SK-N-SH (cell line): ENCODE measurements at regions of chr1 and their contacts with region 1.

Region 1: GRCh38 chr1:234499119-234499942 is 20.4 kb upstream of the TARBP1 start:
- DNase-seq: peak; percentile 85
- H3K4me3 ChIP-seq: peak overlapping the region in 1 of 2 experiments; percentile 21; a peak in 1 of 4 replicates
- H3K27ac ChIP-seq: peak overlapping the region; percentile 71 to 81
- H3K4me1 ChIP-seq: peaks cover 23 to 36% of the 10 kb centered on the region in 2 experiments; a peak in 3 of 4 replicates
- H3K27me3 ChIP-seq: no peaks in the 10 kb centered on the region
- CTCF ChIP-seq: peak; percentile 95
- EP300 ChIP-seq: no peak
- RAD21 ChIP-seq: peak; percentile 99

Region 2: DNA sequence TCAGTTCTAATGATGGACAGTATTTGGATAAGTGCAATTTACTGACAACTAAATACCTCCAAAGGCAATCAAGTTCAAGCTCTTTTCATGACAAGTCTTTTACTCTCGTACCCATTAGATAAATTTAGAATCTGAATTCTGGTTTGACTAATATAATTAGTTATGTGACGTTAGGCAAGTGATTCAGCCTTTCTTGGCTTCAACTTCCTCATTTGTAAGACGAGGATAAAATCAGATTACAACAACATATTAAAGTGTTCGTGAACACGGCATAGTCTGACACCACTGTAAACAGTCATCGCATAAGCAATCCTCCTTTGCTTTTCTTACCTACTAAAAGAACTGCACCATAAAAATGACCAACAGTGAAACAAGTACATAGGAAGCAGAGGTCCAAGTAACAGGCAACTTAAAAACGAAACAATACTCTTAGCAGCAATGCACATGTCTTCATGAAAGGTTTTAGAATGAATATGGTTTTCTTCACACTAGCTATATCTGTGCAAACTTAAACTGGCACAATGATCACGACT is 100.4 kb before region 1 on chr1:
- CTCF ChIA-PET with region 1: no interaction called
- POLR2A ChIA-PET with region 1: no interaction called
- DNase-seq: no peak
- H3K4me3 ChIP-seq: peak overlapping the region in 1 of 2 experiments; percentile 9; a peak in 1 of 4 replicates
- H3K27ac ChIP-seq: peak overlapping the region; percentile 35 to 43
- H3K4me1 ChIP-seq: peaks cover 0 to 5% of the 10 kb centered on the region in 2 experiments; a peak in 2 of 4 replicates
- H3K27me3 ChIP-seq: no peaks in the 10 kb centered on the region
- CTCF ChIP-seq: no peak
- EP300 ChIP-seq: no peak
- RAD21 ChIP-seq: no peak

Region 3: DNA sequence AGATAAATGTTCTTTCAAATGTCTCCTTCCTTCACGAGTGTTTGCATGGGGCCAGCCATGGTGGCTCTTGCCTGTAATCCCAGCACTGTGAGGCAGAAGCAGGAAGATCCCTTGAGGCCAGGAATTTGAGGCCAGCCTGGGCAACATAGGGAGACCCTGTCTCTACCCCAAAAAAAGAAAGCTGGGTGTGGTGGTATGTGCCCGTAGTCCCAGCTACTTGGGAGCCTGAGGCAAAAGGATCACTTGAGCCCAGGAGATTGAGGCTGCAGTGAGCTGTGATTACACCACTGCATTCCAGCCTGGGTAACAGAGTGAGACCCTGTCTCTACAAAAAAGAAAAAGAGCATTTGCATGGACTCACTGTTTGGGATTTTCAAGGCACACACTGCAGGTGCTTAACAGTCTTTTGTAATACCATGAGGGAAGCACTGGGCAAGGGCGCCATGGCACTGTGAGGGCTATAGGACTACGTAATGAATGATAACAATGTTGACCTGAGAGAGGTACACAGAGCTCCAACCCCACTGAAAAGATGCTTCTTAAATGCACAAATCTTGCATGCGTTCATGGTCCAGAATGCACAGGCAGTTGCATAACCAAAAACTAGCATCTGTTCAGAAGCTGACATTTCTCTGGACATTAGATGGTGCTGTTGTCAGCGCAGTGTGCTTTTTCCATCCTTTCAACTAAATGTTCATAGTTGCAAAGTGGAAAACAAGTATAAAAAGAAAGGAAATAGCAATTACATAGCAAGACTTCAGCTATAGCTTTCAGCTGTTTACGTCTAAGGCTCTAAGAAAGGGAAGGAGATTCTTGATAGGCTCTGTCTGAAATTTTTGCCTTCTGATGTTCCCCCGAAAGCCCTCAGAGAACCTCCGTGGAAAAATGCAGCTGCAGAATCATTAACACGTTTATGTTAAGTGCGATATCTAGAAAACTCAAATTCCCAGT is 12.6 kb before region 1 on chr1:
- CTCF ChIA-PET with region 1: interaction called, 19 read pairs
- POLR2A ChIA-PET with region 1: no interaction called
- DNase-seq: peak; percentile 34
- H3K4me3 ChIP-seq: no peak overlapping the region
- H3K27ac ChIP-seq: no peak overlapping the region
- H3K4me1 ChIP-seq: peaks cover 0 to 2% of the 10 kb centered on the region in 2 experiments; a peak in 1 of 4 replicates
- H3K27me3 ChIP-seq: no peaks in the 10 kb centered on the region
- CTCF ChIP-seq: peak; percentile 68
- EP300 ChIP-seq: no peak
- RAD21 ChIP-seq: peak; percentile 84

Region 4: DNA sequence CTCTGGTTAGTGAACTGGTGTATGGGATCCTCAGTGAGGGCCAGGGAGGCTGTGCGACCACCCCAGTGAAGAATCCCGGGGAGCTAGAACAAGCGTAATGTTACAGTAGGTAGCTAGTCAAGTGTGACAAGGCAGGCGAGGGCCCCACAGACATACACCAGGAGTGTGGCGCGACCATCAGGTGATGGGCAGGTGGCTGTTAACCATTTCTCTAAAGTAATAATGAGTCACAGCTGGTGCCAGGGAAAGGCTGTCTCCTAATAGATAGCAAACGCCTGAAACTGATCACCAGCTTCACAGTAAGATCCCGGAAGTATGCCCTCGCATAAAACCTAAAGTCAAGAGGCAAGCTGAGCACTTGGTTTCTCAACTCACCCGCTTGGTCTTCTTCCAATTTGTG is 20.2 kb after region 1 on chr1:
- CTCF ChIA-PET with region 1: interaction called, 15 read pairs
- POLR2A ChIA-PET with region 1: no interaction called
- DNase-seq: no peak
- H3K4me3 ChIP-seq: no peak overlapping the region
- H3K27ac ChIP-seq: no peak overlapping the region
- H3K4me1 ChIP-seq: peaks cover 19 to 46% of the 10 kb centered on the region in 2 experiments
- H3K27me3 ChIP-seq: no peaks in the 10 kb centered on the region
- CTCF ChIP-seq: no peak
- EP300 ChIP-seq: no peak
- RAD21 ChIP-seq: no peak

Region 5: GRCh38 chr1:234553156-234553863 is 54.0 kb after region 1 on chr1:
- CTCF ChIA-PET with region 1: interaction called, 12 read pairs
- POLR2A ChIA-PET with region 1: no interaction called
- DNase-seq: peak; percentile 82
- H3K4me3 ChIP-seq: no peak overlapping the region
- H3K27ac ChIP-seq: peak overlapping the region; percentile 82 to 100
- H3K4me1 ChIP-seq: peaks cover 17 to 53% of the 10 kb centered on the region in 2 experiments
- H3K27me3 ChIP-seq: no peaks in the 10 kb centered on the region
- CTCF ChIP-seq: no peak
- EP300 ChIP-seq: peak; percentile 84 to 92; a peak in 3 of 4 replicates
- RAD21 ChIP-seq: peak; percentile 51

Region 6: DNA sequence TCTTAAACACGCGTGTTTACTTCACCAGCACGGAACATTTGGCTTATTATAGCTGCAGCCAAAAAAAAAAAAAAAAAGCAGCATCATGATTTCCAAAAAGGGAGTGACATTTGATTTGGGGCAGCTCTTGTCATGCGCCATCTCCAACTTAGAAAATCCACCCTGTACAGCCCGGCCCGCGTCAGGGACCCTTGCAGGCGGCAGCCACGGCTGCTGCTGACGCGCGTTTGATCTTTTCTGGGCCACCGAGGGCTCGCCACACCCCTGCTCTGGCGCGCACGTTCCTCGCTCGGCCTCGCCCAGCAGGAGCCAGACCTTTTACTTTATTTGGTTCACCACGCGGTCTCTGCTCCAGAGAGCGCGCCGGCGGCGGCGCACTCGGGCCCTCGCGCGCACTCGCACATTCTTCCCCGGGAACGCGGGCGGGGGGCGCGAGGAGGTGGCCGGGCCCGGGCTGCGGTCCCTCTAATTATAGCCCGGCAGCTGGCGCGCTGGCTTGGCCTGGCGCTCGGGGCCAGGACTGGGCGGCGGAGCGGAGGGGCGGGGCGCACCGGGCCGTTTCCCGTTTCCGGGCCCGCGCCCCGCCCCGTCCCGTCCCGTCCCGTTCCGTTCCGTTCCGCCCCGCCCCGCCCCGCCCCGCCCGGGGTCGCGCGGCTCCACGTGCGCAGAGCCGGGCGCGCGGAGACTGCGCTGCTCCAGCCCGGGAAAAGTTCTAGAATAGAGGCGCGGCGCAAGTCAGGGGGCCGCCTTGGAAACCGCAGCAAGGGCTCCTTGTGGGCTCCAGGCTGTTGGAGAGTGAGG is 100.5 kb after region 1 on chr1:
- CTCF ChIA-PET with region 1: interaction called, 73 read pairs
- POLR2A ChIA-PET with region 1: interaction called, 13 read pairs
- DNase-seq: peak; percentile 93
- H3K4me3 ChIP-seq: peak overlapping the region; percentile 52 to 57
- H3K27ac ChIP-seq: peak overlapping the region; percentile 98 to 100
- H3K4me1 ChIP-seq: peaks cover 39 to 58% of the 10 kb centered on the region in 2 experiments
- H3K27me3 ChIP-seq: no peaks in the 10 kb centered on the region
- CTCF ChIP-seq: 0 out of 2 replicates have a peak, but pooled peaks have one; percentile 5
- EP300 ChIP-seq: no peak
- RAD21 ChIP-seq: no peak

Region 7: DNA sequence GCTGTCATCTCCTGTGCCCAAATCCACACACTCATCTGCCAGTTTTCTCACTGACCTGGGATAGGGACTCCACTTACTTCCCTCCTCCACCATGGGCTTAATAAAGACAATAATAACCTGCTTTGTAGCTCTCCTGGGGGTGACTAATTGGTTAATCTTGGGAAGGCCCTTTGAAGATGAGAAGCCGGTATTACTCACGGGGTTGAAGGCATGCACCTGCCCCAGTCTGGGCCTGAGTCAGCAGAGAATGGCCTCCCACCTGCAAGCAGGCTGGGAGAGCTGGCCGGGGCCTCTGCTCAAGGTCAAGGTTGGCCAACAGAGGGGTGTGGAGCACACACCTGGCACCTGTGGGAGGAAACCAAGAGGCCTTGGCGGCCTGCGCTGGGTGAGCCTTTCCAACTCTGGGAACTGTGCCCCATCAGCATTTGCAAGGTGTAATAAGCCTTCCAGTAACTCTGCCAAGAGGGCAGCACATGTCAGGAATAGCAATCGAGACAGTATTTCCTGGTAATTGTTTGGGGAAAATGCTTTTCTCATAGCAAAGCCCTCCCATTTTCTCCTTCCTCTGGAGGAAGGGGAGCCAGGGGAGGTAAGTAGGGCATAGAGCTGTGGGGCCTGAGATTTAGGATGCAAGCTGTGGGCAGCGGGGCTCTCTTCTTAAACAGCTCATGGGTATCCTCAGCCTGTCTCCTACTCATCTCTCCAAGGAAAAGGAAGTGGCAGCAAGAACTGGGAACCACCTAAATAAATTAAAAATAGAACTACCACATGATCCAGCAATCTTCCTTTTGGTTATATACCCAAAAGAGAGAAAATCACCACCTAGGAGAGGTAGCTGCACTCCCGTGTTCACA is 580.3 kb after region 1 on chr1:
- CTCF ChIA-PET with region 1: interaction called, 70 read pairs
- POLR2A ChIA-PET with region 1: interaction called, 5 read pairs
- DNase-seq: no peak
- H3K4me3 ChIP-seq: no peak overlapping the region
- H3K27ac ChIP-seq: no peak overlapping the region
- H3K4me1 ChIP-seq: peaks cover 28 to 31% of the 10 kb centered on the region in 2 experiments; a peak in 3 of 4 replicates
- H3K27me3 ChIP-seq: no peaks in the 10 kb centered on the region
- CTCF ChIP-seq: no peak
- EP300 ChIP-seq: no peak
- RAD21 ChIP-seq: no peak

Region 8: GRCh38 chr1:235105051-235106043 is 606.0 kb after region 1 on chr1:
- CTCF ChIA-PET with region 1: interaction called, 14 read pairs
- POLR2A ChIA-PET with region 1: no interaction called
- DNase-seq: no peak
- H3K4me3 ChIP-seq: no peak overlapping the region
- H3K27ac ChIP-seq: no peak overlapping the region
- H3K4me1 ChIP-seq: peaks cover 0 to 2% of the 10 kb centered on the region in 2 experiments; a peak in 1 of 4 replicates
- H3K27me3 ChIP-seq: no peaks in the 10 kb centered on the region
- CTCF ChIP-seq: no peak
- EP300 ChIP-seq: no peak
- RAD21 ChIP-seq: no peak